PC-3 (cell line): ENCODE measurements at regions of chr4 and their contacts with region 1.

Region 1: DNA sequence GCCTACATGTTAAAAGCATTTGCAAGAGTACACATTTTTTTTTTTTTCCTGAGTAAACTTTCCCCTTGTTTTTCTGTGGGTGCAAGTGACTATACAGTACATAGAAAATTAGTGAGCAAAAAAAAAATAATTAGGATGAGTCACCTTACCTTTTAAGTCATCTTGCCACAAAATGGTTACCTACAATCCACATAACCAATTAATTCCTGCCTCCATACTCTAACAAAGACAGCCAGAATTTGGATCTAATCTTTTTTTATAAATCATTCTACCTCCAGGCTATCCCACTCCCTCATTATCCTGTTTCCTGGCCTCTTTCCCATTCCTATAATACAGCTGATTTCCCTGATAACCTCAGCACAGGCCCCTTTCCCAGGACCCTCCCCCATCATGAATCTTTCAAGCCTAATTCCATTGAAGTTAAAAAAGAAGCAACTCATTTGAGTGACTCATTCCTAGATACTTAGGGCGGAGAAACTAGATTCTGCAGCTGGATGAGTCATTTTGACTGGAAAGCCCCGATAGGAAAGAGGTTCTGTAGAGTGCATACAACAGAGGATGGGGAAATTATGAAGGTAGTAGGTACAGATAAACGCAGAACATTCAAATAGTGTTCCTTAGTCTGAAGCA is 128.2 kb downstream of the C4orf51 start:
- DNase-seq: peak; percentile 98
- ATAC-seq: peak; percentile 68
- H3K4me3 ChIP-seq: peak overlapping the region; percentile 30; the same call in 1 of the 2 replicates
- H3K27ac ChIP-seq: peak overlapping the region; percentile 92
- H3K4me1 ChIP-seq: peaks cover 48% of the 10 kb centered on the region
- H3K27me3 ChIP-seq: no peaks in the 10 kb centered on the region
- CTCF ChIP-seq: no peak

Region 2: GRCh38 chr4:145785391-145786008 is 22.6 kb before region 1 on chr4:
- CTCF ChIA-PET with region 1: no interaction called
- POLR2A ChIA-PET with region 1: no interaction called
- intact Hi-C with region 1: loop called (anchors 1 kb)
- DNase-seq: peak; percentile 48
- ATAC-seq: peak; percentile 25; the same call in 1 of the 2 replicates
- H3K4me3 ChIP-seq: no peak overlapping the region
- H3K27ac ChIP-seq: peak overlapping the region; percentile 1; the same call in 1 of the 2 replicates
- H3K4me1 ChIP-seq: peaks cover 54% of the 10 kb centered on the region
- H3K27me3 ChIP-seq: no peaks in the 10 kb centered on the region
- CTCF ChIP-seq: no peak

Region 3: DNA sequence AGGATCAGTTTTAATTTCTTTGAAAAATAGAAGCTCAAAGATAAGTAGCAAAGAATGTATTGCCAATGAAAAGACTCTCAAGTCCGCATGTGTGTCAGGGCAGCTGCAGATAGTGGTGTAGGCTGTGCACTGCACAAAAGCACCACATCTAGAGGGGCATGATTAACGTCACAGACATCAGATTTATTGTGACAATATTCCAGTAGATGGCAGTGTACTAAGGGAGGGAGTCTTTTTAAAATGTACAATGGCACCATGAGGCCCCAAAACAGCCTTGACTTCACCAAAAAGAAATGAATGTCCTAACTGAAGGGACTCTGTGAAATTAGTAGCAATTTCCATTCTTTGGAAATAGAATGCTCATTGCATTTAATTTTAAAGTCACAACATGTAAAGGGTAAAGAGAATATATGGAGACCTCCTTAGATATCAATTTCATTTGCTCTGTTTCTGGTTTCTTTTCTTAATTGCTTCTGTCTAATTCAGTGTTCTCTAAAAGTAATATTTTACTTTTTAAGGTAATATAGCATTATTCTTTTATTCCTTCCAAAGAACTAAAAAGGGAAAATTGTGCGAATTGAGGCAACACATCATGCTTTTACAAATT is 32.1 kb after region 1 on chr4:
- CTCF ChIA-PET with region 1: interaction called, 3 read pairs
- POLR2A ChIA-PET with region 1: interaction called, 4 read pairs
- intact Hi-C with region 1: loop called (anchors 5 kb)
- DNase-seq: peak; percentile 82
- ATAC-seq: peak; percentile 90
- H3K4me3 ChIP-seq: no peak overlapping the region
- H3K27ac ChIP-seq: no peak overlapping the region
- H3K4me1 ChIP-seq: peaks cover 9% of the 10 kb centered on the region; the same call in 1 of the 2 replicates
- H3K27me3 ChIP-seq: no peaks in the 10 kb centered on the region
- CTCF ChIP-seq: peak; percentile 83

Region 4: GRCh38 chr4:145887241-145887991 is 79.3 kb after region 1 on chr4:
- CTCF ChIA-PET with region 1: no interaction called
- POLR2A ChIA-PET with region 1: no interaction called
- intact Hi-C with region 1: loop called (anchors 5 kb)
- DNase-seq: peak; percentile 22
- ATAC-seq: peak; percentile 56
- H3K4me3 ChIP-seq: no peak overlapping the region
- H3K27ac ChIP-seq: no peak overlapping the region
- H3K4me1 ChIP-seq: no peaks in the 10 kb centered on the region
- H3K27me3 ChIP-seq: no peaks in the 10 kb centered on the region
- CTCF ChIP-seq: peak; percentile 24; the same call in 1 of the 2 replicates